Common myeloid progenitor, CD34-positive (primary cell): ENCODE measurements at regions of chr16 and their contacts with region 1.

Region 1: DNA sequence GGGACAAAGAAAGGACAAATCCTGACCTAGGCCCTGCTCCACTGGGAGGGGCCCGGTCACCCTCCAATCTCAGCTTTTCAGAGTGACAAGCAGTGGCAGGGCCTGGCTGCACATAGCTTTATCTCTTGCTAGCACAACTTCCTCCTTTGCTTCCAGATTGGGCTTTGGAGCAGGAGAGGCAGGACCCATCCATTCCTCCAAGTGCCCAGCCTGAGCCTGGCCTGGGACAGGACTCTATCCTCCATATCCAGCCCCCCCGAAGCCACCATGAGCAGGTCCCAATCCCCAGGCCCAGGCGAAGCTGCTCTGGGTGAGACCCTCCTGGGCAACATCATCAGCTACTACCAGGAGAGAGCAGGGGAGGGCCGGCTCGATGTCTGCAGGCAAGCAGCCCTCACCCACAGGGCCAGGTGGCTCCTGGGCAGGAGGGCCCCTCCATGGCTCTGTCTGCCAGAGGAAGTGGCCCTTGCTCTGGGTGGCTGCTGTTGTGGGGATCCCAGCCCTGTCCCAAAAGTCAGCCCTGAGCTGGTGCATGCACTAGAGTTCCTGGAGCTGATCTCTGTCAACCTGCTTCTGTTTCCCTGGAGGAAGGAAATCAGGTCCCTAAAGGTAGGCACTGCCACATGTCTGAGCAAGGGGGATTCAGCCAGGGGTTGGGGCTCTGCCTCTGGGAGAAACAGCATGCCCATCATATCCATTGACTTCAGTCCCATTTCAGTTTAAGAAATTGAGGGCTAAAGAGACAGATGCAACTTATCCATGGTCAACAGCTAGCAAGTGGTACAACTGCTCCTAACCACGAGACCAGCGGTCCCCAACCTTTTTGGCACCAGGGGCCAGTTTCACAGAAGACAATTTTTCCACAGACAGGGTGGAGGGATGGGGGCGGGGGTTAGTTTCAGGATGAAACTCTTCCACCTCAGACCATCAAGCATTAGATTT is 58.9 kb downstream of the TK2 start:
- DNase-seq: peak; percentile 48 to 85 (median 76)
- H3K4me3 ChIP-seq: no peak overlapping the region
- H3K27ac ChIP-seq: no peak overlapping the region
- H3K4me1 ChIP-seq: peaks cover 0 to 26% (median 23%) of the 10 kb centered on the region in 4 experiments
- H3K27me3 ChIP-seq: peaks cover 0 to 2% (median 0%) of the 10 kb centered on the region in 5 experiments

Region 2: DNA sequence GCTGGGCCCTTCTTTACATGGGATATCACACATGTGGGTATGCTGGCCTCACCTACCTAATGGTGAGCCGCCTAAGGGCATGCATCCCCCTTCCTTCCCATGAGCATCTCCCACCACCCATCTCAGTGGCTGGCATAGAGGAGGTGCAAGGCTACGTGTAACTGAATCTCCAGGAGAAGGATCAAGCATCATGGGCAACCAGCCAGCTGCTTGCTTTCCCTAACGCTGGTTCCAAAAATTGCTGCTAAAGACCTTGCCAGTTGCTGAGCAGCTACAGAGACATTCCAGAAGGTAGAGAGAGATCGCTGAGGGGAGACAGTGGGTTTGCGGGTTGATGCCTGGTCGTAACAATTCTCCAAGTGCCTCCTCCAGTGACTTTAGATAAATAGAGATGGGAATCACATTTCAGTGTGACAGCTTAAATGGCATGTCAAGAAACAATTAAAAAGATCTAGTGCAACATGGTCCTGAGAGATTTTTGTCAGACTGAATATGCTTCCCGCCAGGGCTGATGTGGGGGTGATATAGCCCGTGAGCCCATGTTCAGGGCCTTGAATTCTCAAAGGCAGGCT is 502.9 kb before region 1 on chr16:
- CTCF ChIA-PET with region 1: no interaction called
- POLR2A ChIA-PET with region 1: no interaction called
- DNase-seq: no peak
- H3K4me3 ChIP-seq: no peak overlapping the region
- H3K27ac ChIP-seq: no peak overlapping the region
- H3K4me1 ChIP-seq: no peaks in the 10 kb centered on the region
- H3K27me3 ChIP-seq: peaks cover 0 to 16% (median 0%) of the 10 kb centered on the region in 5 experiments

Region 3: DNA sequence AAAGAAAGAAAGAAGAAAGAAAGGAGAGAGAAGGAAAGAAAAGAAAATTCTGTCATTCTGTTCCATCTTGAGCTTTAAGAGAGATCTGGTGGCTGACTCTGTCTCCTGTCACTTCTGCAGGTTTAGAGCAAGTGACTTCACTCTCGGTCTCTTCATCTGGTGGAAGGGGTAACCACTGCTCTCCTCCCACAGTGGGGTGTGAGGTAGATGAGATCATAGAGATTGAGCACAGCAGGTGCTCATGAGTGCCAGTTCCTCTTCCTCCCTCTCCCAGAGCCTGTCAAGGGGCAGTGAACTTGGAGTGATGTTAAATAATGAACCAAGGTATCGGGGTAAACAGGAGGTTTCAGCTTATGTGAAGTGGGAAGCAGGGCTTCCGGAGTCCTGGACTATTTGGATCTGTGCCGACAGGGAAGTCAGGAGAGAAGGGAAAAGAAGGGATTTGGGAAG is 16.3 kb before region 1 on chr16:
- CTCF ChIA-PET with region 1: interaction called, 15 read pairs
- POLR2A ChIA-PET with region 1: no interaction called
- DNase-seq: peak; percentile 65 to 91 (median 88)
- H3K4me3 ChIP-seq: no peak overlapping the region
- H3K27ac ChIP-seq: no peak overlapping the region
- H3K4me1 ChIP-seq: peaks cover 0 to 17% (median 4%) of the 10 kb centered on the region in 4 experiments
- H3K27me3 ChIP-seq: no peaks in the 10 kb centered on the region

Region 4: DNA sequence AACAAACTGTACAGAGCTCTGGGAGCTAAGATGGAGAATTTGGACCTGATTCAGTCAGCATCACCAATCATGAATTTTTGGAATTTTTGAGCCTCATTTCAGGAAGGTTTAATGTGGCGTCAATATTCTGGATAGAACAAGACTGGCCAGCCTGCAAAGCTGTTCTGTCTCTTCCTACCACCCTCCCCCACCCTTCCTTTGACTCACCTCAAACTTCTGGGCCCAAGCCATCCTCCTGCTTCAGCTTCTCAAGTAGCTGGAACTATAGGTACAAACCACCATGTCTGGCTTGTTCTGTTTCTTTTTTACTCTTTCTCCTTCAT is 1103.9 kb after region 1 on chr16:
- CTCF ChIA-PET with region 1: no interaction called
- POLR2A ChIA-PET with region 1: no interaction called
- DNase-seq: peak in 1 of 3 donors; percentile 5
- H3K4me3 ChIP-seq: no peak overlapping the region
- H3K27ac ChIP-seq: no peak overlapping the region
- H3K4me1 ChIP-seq: no peaks in the 10 kb centered on the region
- H3K27me3 ChIP-seq: no peaks in the 10 kb centered on the region